CD4-positive, alpha-beta T cell (primary cell): ENCODE measurements at regions of chr16 and their contacts with region 1.

Region 1: GRCh38 chr16:47141773-47142485 is 1.8 kb downstream of the NETO2 start:
- DNase-seq: peak; percentile 63 to 91 (median 77)
- ATAC-seq: peak; percentile 82
- H3K4me3 ChIP-seq: peak overlapping the region; percentile 56
- H3K4me3 Mint-ChIP-seq: peak overlapping the region; percentile 87
- H3K27ac ChIP-seq: no peak overlapping the region
- H3K27ac Mint-ChIP-seq: peak overlapping the region; percentile 45
- H3K4me1 ChIP-seq: peaks cover 17% of the 10 kb centered on the region
- H3K4me1 Mint-ChIP-seq: peaks cover 17% of the 10 kb centered on the region
- H3K27me3 ChIP-seq: peaks cover 0 to 8% of the 10 kb centered on the region in 2 experiments
- H3K27me3 Mint-ChIP-seq: peaks cover 21% of the 10 kb centered on the region
- CTCF ChIP-seq: peak; percentile 83

Region 2: DNA sequence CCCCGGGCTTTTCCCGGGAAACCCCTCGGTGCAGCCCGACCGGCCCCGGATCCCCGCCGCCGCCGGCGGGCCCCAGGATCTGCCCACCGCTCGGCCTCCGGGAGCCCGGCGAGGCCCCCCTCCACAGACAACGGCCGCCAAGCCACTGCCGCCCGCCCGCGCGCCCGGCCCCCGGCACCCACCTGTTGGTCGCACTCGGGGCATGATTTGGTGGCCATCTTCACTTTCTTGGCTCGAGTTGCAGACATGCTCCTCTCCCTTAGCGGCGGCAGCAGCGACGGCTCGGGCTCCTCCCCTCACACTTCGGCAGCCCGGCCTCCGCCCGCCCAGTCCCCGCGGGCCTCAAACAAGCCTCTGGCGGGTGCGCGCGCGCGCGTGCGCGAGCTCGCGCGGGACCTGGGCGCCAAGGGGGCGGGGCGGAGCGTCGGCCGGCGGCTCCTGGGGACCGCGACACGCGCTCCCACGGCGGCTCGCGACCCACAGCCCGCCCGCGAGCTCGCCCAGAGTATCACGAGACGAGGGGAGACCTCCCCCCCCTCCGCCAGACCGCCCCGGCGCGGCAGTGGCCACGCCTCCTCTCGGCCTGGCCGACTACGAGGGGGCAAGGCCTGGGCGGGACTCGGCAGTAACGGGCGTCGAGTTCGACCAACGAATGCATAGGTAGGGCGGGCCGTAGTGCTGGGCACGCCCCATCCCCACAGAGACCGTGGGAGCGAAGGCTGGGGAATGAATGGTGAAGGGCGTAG is 310.9 kb before region 1 on chr16 and contains the start of gene C16orf87:
- CTCF ChIA-PET with region 1: no interaction called
- POLR2A ChIA-PET with region 1: no interaction called
- intact Hi-C with region 1: loop called in 1 of 2 experiments (anchors 10 kb)
- DNase-seq: peak; percentile 81 to 96 (median 90)
- ATAC-seq: peak; percentile 91
- H3K4me3 ChIP-seq: peak within 1 kb of the TSS; percentile 87
- H3K4me3 Mint-ChIP-seq: peak within 1 kb of the TSS; percentile 98
- H3K27ac ChIP-seq: peak within 1 kb of the TSS; percentile 45 to 61
- H3K27ac Mint-ChIP-seq: peak within 1 kb of the TSS; percentile 89
- H3K4me1 ChIP-seq: peaks cover 11% of the 10 kb centered on the region
- H3K4me1 Mint-ChIP-seq: peaks cover 36% of the 10 kb centered on the region
- H3K27me3 ChIP-seq: no peaks in the 10 kb centered on the region
- H3K27me3 Mint-ChIP-seq: no peaks in the 10 kb centered on the region
- CTCF ChIP-seq: no peak
- total RNA-seq, gene C16orf87: 20.6 to 22.6 TPM

Region 3: GRCh38 chr16:47037746-47038458 is 104.0 kb before region 1 on chr16:
- CTCF ChIA-PET with region 1: interaction called, 21 read pairs
- POLR2A ChIA-PET with region 1: interaction called, 7 read pairs
- intact Hi-C with region 1: loop called (anchors 1 to 5 kb)
- DNase-seq: peak; percentile 76 to 94 (median 88)
- ATAC-seq: peak; percentile 97
- H3K4me3 ChIP-seq: peak overlapping the region; percentile 74
- H3K4me3 Mint-ChIP-seq: peak overlapping the region; percentile 67
- H3K27ac ChIP-seq: no peak overlapping the region
- H3K27ac Mint-ChIP-seq: no peak overlapping the region
- H3K4me1 ChIP-seq: peaks cover 13% of the 10 kb centered on the region
- H3K4me1 Mint-ChIP-seq: no peaks in the 10 kb centered on the region
- H3K27me3 ChIP-seq: no peaks in the 10 kb centered on the region
- H3K27me3 Mint-ChIP-seq: no peaks in the 10 kb centered on the region
- CTCF ChIP-seq: peak; percentile 93

Region 4: GRCh38 chr16:48117217-48118105 is 975.5 kb after region 1 on chr16:
- CTCF ChIA-PET with region 1: no interaction called
- POLR2A ChIA-PET with region 1: no interaction called
- intact Hi-C with region 1: loop called in 1 of 2 experiments (anchors 5 kb)
- DNase-seq: peak; percentile 16 to 67 (median 36)
- ATAC-seq: peak; percentile 52
- H3K4me3 ChIP-seq: no peak overlapping the region
- H3K4me3 Mint-ChIP-seq: no peak overlapping the region
- H3K27ac ChIP-seq: no peak overlapping the region
- H3K27ac Mint-ChIP-seq: no peak overlapping the region
- H3K4me1 ChIP-seq: no peaks in the 10 kb centered on the region
- H3K4me1 Mint-ChIP-seq: no peaks in the 10 kb centered on the region
- H3K27me3 ChIP-seq: peaks cover 0 to 2% of the 10 kb centered on the region in 2 experiments
- H3K27me3 Mint-ChIP-seq: no peaks in the 10 kb centered on the region
- CTCF ChIP-seq: peak; percentile 30

Region 5: DNA sequence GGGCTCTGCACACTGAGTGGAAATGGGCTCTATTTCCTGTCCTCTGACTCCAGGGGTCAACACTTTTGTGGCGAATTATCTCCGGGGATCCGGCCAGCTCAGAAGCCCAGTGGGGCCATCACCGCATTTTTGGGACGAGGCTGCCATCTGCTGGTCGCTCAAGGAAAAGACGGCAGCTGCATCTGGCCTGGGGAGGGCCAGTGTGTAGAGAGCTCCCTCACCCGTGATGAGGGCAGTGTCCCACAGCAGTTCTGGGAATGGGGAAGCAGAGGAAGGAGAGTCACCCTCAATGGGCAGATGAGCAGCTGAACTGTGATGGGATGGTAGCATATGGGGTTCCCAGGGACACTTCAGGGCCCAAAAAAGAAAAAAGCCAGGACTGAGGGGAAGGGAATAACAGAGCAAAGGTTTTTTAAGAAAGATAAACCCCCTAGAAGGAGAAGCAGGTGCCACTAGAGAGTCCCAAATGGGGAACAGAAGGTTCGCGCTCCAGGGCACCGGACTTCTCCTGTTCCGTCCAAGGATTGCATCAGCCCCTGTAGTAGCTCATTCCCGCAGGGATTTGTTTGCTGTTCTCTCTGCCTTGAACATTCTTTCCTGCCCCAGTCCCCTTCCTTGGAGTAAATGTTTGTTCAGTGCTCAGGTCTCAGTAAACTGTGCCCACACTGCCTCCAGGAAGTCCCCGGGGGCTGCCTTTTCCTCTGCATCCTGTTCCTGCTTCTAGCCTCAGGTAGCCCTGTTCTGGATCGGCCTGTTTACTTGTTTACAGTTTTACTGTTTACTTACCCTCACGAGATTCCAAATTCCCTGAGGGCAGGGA is 1023.2 kb after region 1 on chr16:
- CTCF ChIA-PET with region 1: interaction called, 8 read pairs
- POLR2A ChIA-PET with region 1: no interaction called
- intact Hi-C with region 1: loop called (anchors 2 kb)
- DNase-seq: peak; percentile 37 to 79 (median 57)
- ATAC-seq: peak; percentile 81
- H3K4me3 ChIP-seq: no peak overlapping the region
- H3K4me3 Mint-ChIP-seq: no peak overlapping the region
- H3K27ac ChIP-seq: no peak overlapping the region
- H3K27ac Mint-ChIP-seq: no peak overlapping the region
- H3K4me1 ChIP-seq: peaks cover 5% of the 10 kb centered on the region
- H3K4me1 Mint-ChIP-seq: peaks cover 5% of the 10 kb centered on the region
- H3K27me3 ChIP-seq: no peaks in the 10 kb centered on the region
- H3K27me3 Mint-ChIP-seq: no peaks in the 10 kb centered on the region
- CTCF ChIP-seq: peak; percentile 81

Region 6: GRCh38 chr16:48385272-48386150 is 1243.6 kb after region 1 on chr16 and contains the start of gene SIAH1:
- CTCF ChIA-PET with region 1: no interaction called
- POLR2A ChIA-PET with region 1: interaction called, 4 read pairs
- intact Hi-C with region 1: loop called in 1 of 2 experiments (anchors 5 kb)
- DNase-seq: peak; percentile 73 to 96 (median 86)
- ATAC-seq: peak; percentile 80
- H3K4me3 ChIP-seq: peak within 1 kb of the TSS; percentile 81
- H3K4me3 Mint-ChIP-seq: peak within 1 kb of the TSS; percentile 98
- H3K27ac ChIP-seq: peak within 1 kb of the TSS in 1 of 2 donors; percentile 46
- H3K27ac Mint-ChIP-seq: peak within 1 kb of the TSS; percentile 92
- H3K4me1 ChIP-seq: peaks cover 12% of the 10 kb centered on the region
- H3K4me1 Mint-ChIP-seq: peaks cover 27% of the 10 kb centered on the region
- H3K27me3 ChIP-seq: no peaks in the 10 kb centered on the region
- H3K27me3 Mint-ChIP-seq: no peaks in the 10 kb centered on the region
- CTCF ChIP-seq: no peak
- total RNA-seq, gene SIAH1: 40.9 to 43.0 TPM